Activated naive CD4-positive, alpha-beta T cell treated with anti-CD3 and anti-CD28 coated beads, Interleukin-2, amount 10 ng/mL, durations not matched to agents 7 days and 5 days (primary cell): ENCODE measurements at regions of chr14 and their contacts with region 1.

Region 1: GRCh38 chr14:100645192-100645990 is 58.2 kb upstream of the BEGAIN start:
- DNase-seq: peak; percentile 93
- H3K4me3 Mint-ChIP-seq: peak overlapping the region; percentile 1
- H3K27ac Mint-ChIP-seq: peak overlapping the region; percentile 75
- H3K4me1 Mint-ChIP-seq: peaks cover 60% of the 10 kb centered on the region
- H3K27me3 Mint-ChIP-seq: peaks cover 50% of the 10 kb centered on the region

Region 2: GRCh38 chr14:100434033-100434601 is 211.3 kb before region 1 on chr14:
- CTCF ChIA-PET with region 1: interaction called, 56 read pairs
- DNase-seq: no peak
- H3K4me3 Mint-ChIP-seq: no peak overlapping the region
- H3K27ac Mint-ChIP-seq: no peak overlapping the region
- H3K4me1 Mint-ChIP-seq: no peaks in the 10 kb centered on the region
- H3K27me3 Mint-ChIP-seq: no peaks in the 10 kb centered on the region

Region 3: GRCh38 chr14:100524933-100525243 is 120.5 kb before region 1 on chr14:
- CTCF ChIA-PET with region 1: interaction called, 45 read pairs
- DNase-seq: peak; percentile 47
- H3K4me3 Mint-ChIP-seq: no peak overlapping the region
- H3K27ac Mint-ChIP-seq: no peak overlapping the region
- H3K4me1 Mint-ChIP-seq: no peaks in the 10 kb centered on the region
- H3K27me3 Mint-ChIP-seq: no peaks in the 10 kb centered on the region

Region 4: GRCh38 chr14:100617410-100618317 is 27.7 kb before region 1 on chr14:
- CTCF ChIA-PET with region 1: interaction called, 23 read pairs
- DNase-seq: peak; percentile 41
- H3K4me3 Mint-ChIP-seq: peak overlapping the region; percentile 5
- H3K27ac Mint-ChIP-seq: peak overlapping the region; percentile 38
- H3K4me1 Mint-ChIP-seq: peaks cover 16% of the 10 kb centered on the region
- H3K27me3 Mint-ChIP-seq: peaks cover 76% of the 10 kb centered on the region

Region 5: GRCh38 chr14:100662879-100663760 is 17.7 kb after region 1 on chr14:
- CTCF ChIA-PET with region 1: interaction called, 11 read pairs
- DNase-seq: peak; percentile 72
- H3K4me3 Mint-ChIP-seq: no peak overlapping the region
- H3K27ac Mint-ChIP-seq: peak overlapping the region; percentile 54
- H3K4me1 Mint-ChIP-seq: peaks cover 6% of the 10 kb centered on the region
- H3K27me3 Mint-ChIP-seq: peaks cover 23% of the 10 kb centered on the region